HCT116 (cell line): ENCODE measurements at regions of chr17 and their contacts with region 1.

Region 1: GRCh38 chr17:63600569-63601438 is at the start of gene TACO1:
- DNase-seq: peak; percentile 79
- ATAC-seq: peak; percentile 97
- H3K4me3 ChIP-seq: peak within 1 kb of the TSS; percentile 92 to 93
- H3K27ac ChIP-seq: peak within 1 kb of the TSS; percentile 48
- H3K4me1 ChIP-seq: peaks cover 7 to 20% of the 10 kb centered on the region in 2 experiments
- H3K27me3 ChIP-seq: no peaks in the 10 kb centered on the region
- CTCF ChIP-seq: no peak
- POLR2A ChIP-seq: peak; percentile 73
- RAD21 ChIP-seq: peak; percentile 19; the same call in 1 of the 2 replicates
- total RNA-seq, gene TACO1: 39.6 TPM

Region 2: DNA sequence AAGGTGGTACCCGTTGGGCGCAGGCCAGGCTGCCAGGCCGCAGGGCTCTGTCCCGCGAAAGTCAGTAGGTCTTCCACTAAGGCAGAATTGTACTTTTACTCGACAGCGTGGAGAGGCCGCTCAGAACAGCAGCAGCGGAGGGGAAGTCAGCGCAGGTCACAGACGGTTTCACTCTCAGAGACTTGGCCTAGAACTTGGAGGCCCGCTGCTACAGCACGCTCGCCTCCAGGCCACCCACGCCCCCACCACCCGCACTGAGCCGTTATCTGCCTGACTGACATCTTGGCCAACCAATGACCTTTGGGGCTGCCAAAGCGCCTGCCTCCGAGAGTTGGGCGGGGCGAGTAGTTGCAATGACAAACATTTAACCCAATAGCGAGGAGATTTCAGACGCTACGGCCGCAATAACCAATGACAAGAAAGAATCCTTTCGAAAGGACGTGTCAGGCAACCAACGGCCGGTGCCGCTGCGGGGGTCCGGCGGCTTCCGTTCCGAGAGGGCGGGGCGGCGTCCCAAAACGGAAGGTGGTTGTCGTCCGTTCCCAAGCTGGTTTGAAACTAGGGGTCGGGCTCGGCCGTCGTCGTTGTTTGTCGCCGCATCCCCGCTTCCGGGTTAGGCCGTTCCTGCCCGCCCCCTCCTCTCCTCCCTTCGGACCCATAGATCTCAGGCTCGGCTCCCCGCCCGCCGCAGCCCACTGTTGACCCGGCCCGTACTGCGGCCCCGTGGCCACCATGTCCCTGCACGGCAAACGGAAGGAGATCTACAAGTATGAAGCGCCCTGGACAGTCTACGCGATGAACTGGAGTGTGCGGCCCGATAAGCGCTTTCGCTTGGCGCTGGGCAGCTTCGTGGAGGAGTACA is 50.6 kb before region 1 on chr17 and contains the start of gene DCAF7:
- CTCF ChIA-PET with region 1: no interaction called
- POLR2A ChIA-PET with region 1: no interaction called
- RAD21 ChIA-PET with region 1: no interaction called
- intact Hi-C with region 1: loop called (anchors 5 kb)
- DNase-seq: peak; percentile 100
- ATAC-seq: peak; percentile 94
- H3K4me3 ChIP-seq: peak within 1 kb of the TSS; percentile 71 to 76
- H3K27ac ChIP-seq: peak within 1 kb of the TSS; percentile 89
- H3K4me1 ChIP-seq: peaks cover 12 to 20% of the 10 kb centered on the region in 2 experiments
- H3K27me3 ChIP-seq: no peaks in the 10 kb centered on the region
- CTCF ChIP-seq: no peak
- POLR2A ChIP-seq: peak; percentile 92
- RAD21 ChIP-seq: no peak
- total RNA-seq, gene DCAF7: 144 TPM

Region 3: DNA sequence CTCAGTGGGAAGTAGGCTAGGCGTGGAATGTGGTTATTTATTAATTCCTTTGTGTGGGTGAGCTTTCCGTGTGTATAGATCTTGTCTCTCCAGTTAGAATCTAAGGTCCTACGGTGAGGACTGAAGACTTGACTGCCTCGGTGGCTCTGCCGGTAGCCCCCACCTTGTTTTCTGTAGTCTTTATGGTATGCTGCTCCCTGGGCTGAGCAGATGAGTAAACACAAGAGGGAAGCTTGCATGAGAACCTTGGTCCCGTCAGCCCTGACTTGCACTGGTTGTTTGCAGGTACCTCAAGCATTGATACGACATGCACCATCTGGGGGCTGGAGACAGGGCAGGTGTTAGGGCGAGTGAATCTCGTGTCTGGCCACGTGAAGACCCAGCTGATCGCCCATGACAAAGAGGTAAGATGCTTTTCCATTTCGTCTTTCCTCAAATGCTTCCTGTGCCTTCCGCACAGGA is 21.2 kb before region 1 on chr17:
- CTCF ChIA-PET with region 1: no interaction called
- POLR2A ChIA-PET with region 1: no interaction called
- RAD21 ChIA-PET with region 1: no interaction called
- intact Hi-C with region 1: no loop called
- DNase-seq: no peak
- ATAC-seq: no peak
- H3K4me3 ChIP-seq: no peak overlapping the region
- H3K27ac ChIP-seq: no peak overlapping the region
- H3K4me1 ChIP-seq: no peaks in the 10 kb centered on the region
- H3K27me3 ChIP-seq: no peaks in the 10 kb centered on the region
- CTCF ChIP-seq: no peak
- POLR2A ChIP-seq: no peak
- RAD21 ChIP-seq: no peak

Region 4: DNA sequence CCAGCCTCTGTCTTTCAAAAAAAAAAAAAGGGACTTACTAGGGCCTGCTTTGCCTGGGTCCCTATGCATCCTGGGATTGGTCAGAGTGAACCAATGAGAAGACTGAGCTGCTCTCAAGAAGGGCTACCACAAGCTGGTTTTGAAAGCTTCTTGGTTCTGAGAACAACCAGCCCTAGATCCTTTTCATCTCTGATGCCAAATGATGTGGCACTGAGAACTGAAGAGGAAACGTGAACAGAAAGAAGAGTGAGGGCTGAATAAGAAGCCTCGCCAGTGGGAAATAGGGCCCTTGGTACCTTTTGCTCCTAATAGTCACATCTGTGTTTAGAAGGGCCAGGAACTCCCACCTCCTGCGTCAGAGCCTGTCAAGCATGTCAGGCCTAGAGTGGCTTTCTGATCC is 10.6 kb after region 1 on chr17:
- CTCF ChIA-PET with region 1: interaction called, 11 read pairs
- POLR2A ChIA-PET with region 1: interaction called, 3 read pairs
- RAD21 ChIA-PET with region 1: no interaction called
- intact Hi-C with region 1: no loop called
- DNase-seq: no peak
- ATAC-seq: no peak
- H3K4me3 ChIP-seq: no peak overlapping the region
- H3K27ac ChIP-seq: no peak overlapping the region
- H3K4me1 ChIP-seq: no peaks in the 10 kb centered on the region
- H3K27me3 ChIP-seq: no peaks in the 10 kb centered on the region
- CTCF ChIP-seq: no peak
- POLR2A ChIP-seq: no peak
- RAD21 ChIP-seq: no peak

Region 5: DNA sequence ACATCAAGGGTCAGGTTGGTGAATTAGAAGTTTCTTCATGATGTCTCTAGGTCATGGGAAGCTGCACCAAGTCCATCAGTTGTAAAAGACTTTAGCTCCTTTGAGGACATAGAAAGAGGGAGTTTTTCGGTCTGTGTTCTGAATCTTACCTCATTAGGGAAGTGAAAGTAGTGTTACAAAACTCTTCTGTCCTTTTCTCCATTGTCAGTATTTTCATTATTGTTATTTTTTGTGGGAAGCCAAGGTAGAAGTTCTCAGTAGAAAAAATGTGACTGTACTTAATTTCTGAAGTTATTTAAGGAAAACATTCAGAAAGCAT is 45.6 kb after region 1 on chr17:
- CTCF ChIA-PET with region 1: no interaction called
- POLR2A ChIA-PET with region 1: no interaction called
- RAD21 ChIA-PET with region 1: no interaction called
- intact Hi-C with region 1: no loop called
- DNase-seq: no peak
- ATAC-seq: no peak
- H3K4me3 ChIP-seq: no peak overlapping the region
- H3K27ac ChIP-seq: no peak overlapping the region
- H3K4me1 ChIP-seq: peaks cover 8 to 13% of the 10 kb centered on the region in 2 experiments; a peak in 3 of 4 replicates
- H3K27me3 ChIP-seq: no peaks in the 10 kb centered on the region
- CTCF ChIP-seq: no peak
- POLR2A ChIP-seq: no peak
- RAD21 ChIP-seq: no peak

Region 6: GRCh38 chr17:63714547-63715277 is 113.9 kb after region 1 on chr17:
- CTCF ChIA-PET with region 1: no interaction called
- POLR2A ChIA-PET with region 1: no interaction called
- RAD21 ChIA-PET with region 1: no interaction called
- intact Hi-C with region 1: no loop called
- DNase-seq: no peak
- ATAC-seq: no peak
- H3K4me3 ChIP-seq: no peak overlapping the region
- H3K27ac ChIP-seq: no peak overlapping the region
- H3K4me1 ChIP-seq: no peaks in the 10 kb centered on the region
- H3K27me3 ChIP-seq: no peaks in the 10 kb centered on the region
- CTCF ChIP-seq: no peak
- POLR2A ChIP-seq: no peak
- RAD21 ChIP-seq: no peak

Region 7: DNA sequence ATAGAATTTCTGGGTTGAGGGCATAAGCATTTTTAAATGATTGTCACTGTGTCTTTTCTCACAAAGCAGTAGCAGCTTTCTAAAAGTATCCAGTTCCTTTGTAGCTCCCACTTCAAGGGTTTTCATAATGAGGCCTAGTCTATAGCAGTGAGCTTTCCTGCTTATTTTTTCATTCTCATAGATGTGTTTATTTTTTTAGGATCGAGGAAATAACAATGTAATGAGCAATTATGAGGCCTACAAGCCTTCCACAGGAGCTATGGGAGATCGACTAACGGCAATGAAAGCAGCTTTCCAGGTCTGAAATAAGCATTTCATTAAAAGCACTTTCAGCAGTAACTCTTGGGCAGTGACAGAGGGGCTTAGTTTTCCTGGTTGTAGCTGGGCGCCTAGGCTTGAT is 215.9 kb after region 1 on chr17:
- CTCF ChIA-PET with region 1: no interaction called
- POLR2A ChIA-PET with region 1: no interaction called
- RAD21 ChIA-PET with region 1: no interaction called
- intact Hi-C with region 1: no loop called
- DNase-seq: no peak
- ATAC-seq: no peak
- H3K4me3 ChIP-seq: no peak overlapping the region
- H3K27ac ChIP-seq: no peak overlapping the region
- H3K4me1 ChIP-seq: no peaks in the 10 kb centered on the region
- H3K27me3 ChIP-seq: no peaks in the 10 kb centered on the region
- CTCF ChIP-seq: no peak
- POLR2A ChIP-seq: no peak
- RAD21 ChIP-seq: no peak